ENCODE measurements at regions of chr4 and their contacts with region 1.

Region 1: GRCh38 chr4:153421941-153422340 is 44.2 kb upstream of the TMEM131L start:
- DNase-seq: no peak
- H3K4me3 Mint-ChIP-seq: no peak overlapping the region
- H3K27ac Mint-ChIP-seq: no peak overlapping the region
- H3K4me1 Mint-ChIP-seq: peaks cover 41% of the 10 kb centered on the region
- H3K27me3 Mint-ChIP-seq: no peaks in the 10 kb centered on the region

Region 2: GRCh38 chr4:153362184-153362583 is 59.8 kb before region 1 on chr4:
- intact Hi-C with region 1: loop called (anchors 2 kb)
- DNase-seq: no peak
- H3K4me3 Mint-ChIP-seq: no peak overlapping the region
- H3K27ac Mint-ChIP-seq: no peak overlapping the region
- H3K4me1 Mint-ChIP-seq: peaks cover 10% of the 10 kb centered on the region
- H3K27me3 Mint-ChIP-seq: no peaks in the 10 kb centered on the region

Measured in activated T-helper 1 cell treated with anti-CD3 and anti-CD28 coated beads, Interleukin-12 subunit alpha, Interleukin-12 subunit beta, Interleukin-2, Interleukin-4 antibody, amounts not matched to agents 30 ng/mL and 10 ng/mL and 1 ng/mL, durations not matched to agents 14 hours and 24 hours and 36 hours (primary cell).